H1 (cell line): ENCODE measurements at regions of chr9 and their contacts with region 1.

Region 1: GRCh38 chr9:109192732-109193361 is 25.8 kb upstream of the FRRS1L start:
- DNase-seq: peak; percentile 31 to 73
- H3K4me3 ChIP-seq: no peak overlapping the region
- H3K27ac ChIP-seq: no peak overlapping the region
- H3K4me1 ChIP-seq: no peaks in the 10 kb centered on the region
- H3K27me3 ChIP-seq: no peaks in the 10 kb centered on the region; a peak in 1 of 7 replicates
- CTCF ChIP-seq: peak; percentile 80 to 86 (median 81)
- EP300 ChIP-seq: no peak
- POLR2A ChIP-seq: no peak
- RAD21 ChIP-seq: peak; percentile 87

Region 2: GRCh38 chr9:109119439-109120203 is 73.2 kb before region 1 on chr9 and contains the start of gene TMEM245:
- CTCF ChIA-PET with region 1: no interaction called
- POLR2A ChIA-PET with region 1: no interaction called
- DNase-seq: peak; percentile 91 to 97
- H3K4me3 ChIP-seq: peak within 1 kb of the TSS; percentile 65 to 91 (median 82)
- H3K27ac ChIP-seq: peak within 1 kb of the TSS; percentile 84
- H3K4me1 ChIP-seq: peaks cover 7 to 16% (median 13%) of the 10 kb centered on the region in 4 experiments
- H3K27me3 ChIP-seq: no peaks in the 10 kb centered on the region
- CTCF ChIP-seq: no peak
- EP300 ChIP-seq: no peak
- POLR2A ChIP-seq: peak; percentile 87 to 90
- RAD21 ChIP-seq: no peak
- total RNA-seq, gene TMEM245: 42.1 and 44.3 TPM in 2 replicates

Region 3: DNA sequence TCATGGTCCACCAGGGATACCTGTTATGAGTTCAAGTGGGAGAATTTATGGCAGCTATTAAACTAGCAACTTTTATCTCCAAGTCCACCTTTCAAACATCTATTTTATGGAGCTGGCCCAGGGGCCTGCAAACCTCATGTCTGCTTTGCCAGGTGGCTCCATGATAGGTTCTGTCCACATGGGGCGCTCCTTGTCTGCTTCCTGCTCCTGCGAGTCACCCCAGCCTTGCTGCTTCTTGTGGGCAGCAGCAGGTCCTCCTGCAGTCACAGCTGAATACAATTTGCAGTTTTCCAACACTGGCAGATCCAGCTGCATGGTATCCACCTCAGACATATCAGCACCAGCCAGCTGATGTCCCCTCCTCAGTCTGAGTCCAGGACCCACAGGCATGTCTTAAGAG is 13.8 kb after region 1 on chr9:
- CTCF ChIA-PET with region 1: interaction called, 34 read pairs
- POLR2A ChIA-PET with region 1: no interaction called
- DNase-seq: peak in 1 of 2 experiments; percentile 17
- H3K4me3 ChIP-seq: no peak overlapping the region
- H3K27ac ChIP-seq: no peak overlapping the region
- H3K4me1 ChIP-seq: no peaks in the 10 kb centered on the region
- H3K27me3 ChIP-seq: no peaks in the 10 kb centered on the region
- CTCF ChIP-seq: peak; percentile 40 to 54 (median 45)
- EP300 ChIP-seq: no peak
- POLR2A ChIP-seq: no peak
- RAD21 ChIP-seq: peak; percentile 42 to 50; a peak in 2 of 4 replicates

Region 4: DNA sequence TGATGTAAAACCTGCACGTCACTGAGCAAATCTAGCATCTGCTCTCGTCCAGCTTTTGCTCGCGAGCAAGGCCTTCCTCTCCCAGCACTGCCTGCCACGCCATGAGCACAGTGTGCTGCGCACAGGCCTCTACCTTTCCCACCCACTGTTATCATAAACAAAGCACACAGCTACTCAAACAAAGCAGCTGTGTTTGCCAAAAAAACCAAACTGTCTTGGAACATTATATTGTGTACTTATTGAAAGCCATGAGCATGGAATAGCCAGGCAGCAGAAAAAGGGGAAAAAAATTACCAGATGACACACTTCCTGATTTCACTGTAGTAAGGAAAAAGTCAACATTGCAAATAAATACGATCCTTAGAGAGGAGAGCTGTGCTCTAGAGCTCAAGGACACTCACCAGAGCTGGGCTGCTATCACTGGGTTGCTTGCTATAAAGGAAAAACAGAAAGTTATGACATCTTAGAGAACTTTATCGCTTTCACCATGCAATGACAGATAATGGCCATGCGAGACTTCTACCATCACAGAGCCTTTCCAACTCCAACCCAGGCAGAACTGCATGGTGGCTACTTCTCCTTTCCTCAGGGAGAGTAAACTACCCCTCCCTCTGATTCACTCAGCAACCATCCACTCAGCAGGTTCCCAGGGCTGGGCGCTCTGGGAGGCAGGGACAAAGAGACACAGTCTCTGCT is 58.4 kb after region 1 on chr9:
- CTCF ChIA-PET with region 1: interaction called, 15 read pairs
- POLR2A ChIA-PET with region 1: no interaction called
- DNase-seq: peak in 1 of 2 experiments; percentile 28
- H3K4me3 ChIP-seq: no peak overlapping the region
- H3K27ac ChIP-seq: no peak overlapping the region
- H3K4me1 ChIP-seq: peaks cover 0 to 4% (median 3%) of the 10 kb centered on the region in 4 experiments; a peak in 2 of 7 replicates
- H3K27me3 ChIP-seq: no peaks in the 10 kb centered on the region
- CTCF ChIP-seq: no peak
- EP300 ChIP-seq: no peak
- POLR2A ChIP-seq: no peak
- RAD21 ChIP-seq: no peak

Region 5: GRCh38 chr9:109401168-109401989 is 208.5 kb after region 1 on chr9:
- CTCF ChIA-PET with region 1: interaction called, 13 read pairs
- POLR2A ChIA-PET with region 1: no interaction called
- DNase-seq: peak; percentile 58 to 87
- H3K4me3 ChIP-seq: no peak overlapping the region; a peak in 1 of 8 replicates
- H3K27ac ChIP-seq: no peak overlapping the region
- H3K4me1 ChIP-seq: peaks cover 0 to 5% (median 1%) of the 10 kb centered on the region in 4 experiments; a peak in 1 of 7 replicates
- H3K27me3 ChIP-seq: no peaks in the 10 kb centered on the region
- CTCF ChIP-seq: peak; percentile 90 to 99 (median 99)
- EP300 ChIP-seq: no peak
- POLR2A ChIP-seq: no peak
- RAD21 ChIP-seq: peak; percentile 88 to 92